Right lobe of liver (tissue), 6 donors: ENCODE measurements at regions of chr17 and their contacts with region 1.

Region 1: DNA sequence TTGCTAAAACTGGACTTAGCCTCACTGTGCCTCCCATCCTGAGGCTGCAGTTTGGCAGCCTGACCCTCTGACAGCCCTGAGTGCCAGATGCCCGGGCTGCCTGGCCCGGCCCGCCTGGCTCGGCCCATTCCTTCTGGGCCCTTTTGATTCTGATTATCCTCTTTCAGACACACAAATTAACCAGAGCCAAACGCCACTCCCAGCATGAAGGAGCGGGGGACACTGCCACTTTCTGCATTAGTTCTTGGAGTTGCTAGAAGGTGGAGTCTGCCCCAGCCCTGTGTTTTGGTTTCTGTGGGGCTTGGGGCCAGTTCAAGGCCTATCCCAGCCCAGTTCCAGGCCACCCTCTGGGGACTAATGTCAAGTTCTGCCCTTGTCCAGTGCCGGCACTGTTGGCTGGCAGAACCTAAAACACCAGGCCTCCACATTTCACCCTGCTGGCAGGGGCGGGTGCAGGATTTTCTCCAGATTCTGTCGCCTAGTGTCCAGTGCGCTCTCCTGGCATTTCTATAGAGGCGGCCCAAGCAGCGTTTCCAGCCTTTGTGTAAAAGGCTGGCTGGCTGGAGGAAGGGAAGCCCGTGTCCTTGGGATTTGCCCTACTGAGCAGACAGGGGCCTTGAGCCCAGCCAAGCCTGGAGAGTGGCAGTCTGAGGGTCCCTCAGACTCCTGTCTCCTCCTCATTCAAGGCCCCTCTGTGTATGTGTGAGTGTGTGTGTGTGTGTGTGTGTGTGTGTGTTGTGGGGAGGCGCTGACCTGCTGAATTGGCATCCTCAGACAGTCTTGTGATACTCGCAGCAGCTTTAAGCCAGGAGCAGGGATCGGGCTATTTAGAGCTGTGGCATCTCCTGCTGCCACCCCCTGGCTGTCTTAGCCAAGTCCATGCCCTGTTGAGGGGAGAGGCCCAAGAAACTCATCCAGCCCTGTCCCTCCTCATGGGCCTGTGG is 21.4 kb downstream of the PLCD3 start:
- DNase-seq: no peak
- ATAC-seq: peak in 2 of 4 donors; percentile 7 to 11
- H3K4me3 ChIP-seq: no peak overlapping the region
- H3K27ac ChIP-seq: no peak overlapping the region
- H3K4me1 ChIP-seq: peaks cover 0 to 4% (median 0%) of the 10 kb centered on the region in 4 donors
- H3K27me3 ChIP-seq: no peaks in the 10 kb centered on the region
- CTCF ChIP-seq: no peak
- POLR2A ChIP-seq: no peak

Region 2: DNA sequence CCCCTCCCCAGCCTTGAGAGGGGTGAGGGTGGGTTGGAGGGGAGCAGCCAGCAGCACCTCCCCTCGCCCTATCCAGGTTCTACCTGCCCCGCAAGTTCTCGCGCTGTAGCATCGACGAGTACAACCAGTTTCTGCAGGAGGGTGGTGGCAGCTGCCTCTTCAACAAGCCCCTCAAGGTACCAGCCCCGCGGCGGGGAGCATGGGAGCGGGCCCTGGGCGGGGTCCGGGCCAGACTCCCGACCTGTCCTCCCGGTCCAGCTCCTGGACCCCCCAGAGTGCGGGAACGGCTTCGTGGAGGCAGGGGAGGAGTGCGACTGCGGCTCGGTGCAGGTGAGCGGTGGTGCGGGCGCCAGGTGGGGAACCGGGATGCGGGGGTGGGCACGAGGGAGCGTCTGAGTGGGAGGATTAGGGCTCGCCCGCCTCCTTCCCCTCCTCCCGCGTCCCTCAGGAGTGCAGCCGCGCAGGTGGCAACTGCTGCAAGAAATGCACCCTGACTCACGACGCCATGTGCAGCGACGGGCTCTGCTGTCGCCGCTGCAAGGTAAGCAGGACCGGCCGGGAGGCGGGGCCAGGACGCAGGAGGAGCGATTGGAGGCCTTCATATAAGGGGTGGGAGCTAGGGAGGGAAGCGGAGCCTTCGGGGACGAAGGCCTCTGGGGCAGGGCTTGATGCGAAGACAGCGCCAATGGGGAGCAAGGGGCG is 335.7 kb before region 1 on chr17:
- intact Hi-C with region 1: loop called in 1 of 2 experiments (anchors 10 kb)
- DNase-seq: peak; percentile 97 to 98 (median 98)
- ATAC-seq: peak; percentile 93 to 96 (median 95)
- H3K4me3 ChIP-seq: peak overlapping the region; percentile 45 to 59 (median 57)
- H3K27ac ChIP-seq: no peak overlapping the region
- H3K4me1 ChIP-seq: peaks cover 0 to 13% (median 3%) of the 10 kb centered on the region in 4 donors
- H3K27me3 ChIP-seq: no peaks in the 10 kb centered on the region
- CTCF ChIP-seq: no peak
- POLR2A ChIP-seq: no peak

Region 3: GRCh38 chr17:45038728-45039634 is 72.0 kb before region 1 on chr17:
- intact Hi-C with region 1: loop called in 1 of 2 experiments (anchors 10 kb)
- DNase-seq: no peak
- ATAC-seq: no peak
- H3K4me3 ChIP-seq: no peak overlapping the region
- H3K27ac ChIP-seq: no peak overlapping the region
- H3K4me1 ChIP-seq: peaks cover 0 to 17% (median 3%) of the 10 kb centered on the region in 4 donors
- H3K27me3 ChIP-seq: no peaks in the 10 kb centered on the region
- CTCF ChIP-seq: no peak
- POLR2A ChIP-seq: no peak

Region 4: DNA sequence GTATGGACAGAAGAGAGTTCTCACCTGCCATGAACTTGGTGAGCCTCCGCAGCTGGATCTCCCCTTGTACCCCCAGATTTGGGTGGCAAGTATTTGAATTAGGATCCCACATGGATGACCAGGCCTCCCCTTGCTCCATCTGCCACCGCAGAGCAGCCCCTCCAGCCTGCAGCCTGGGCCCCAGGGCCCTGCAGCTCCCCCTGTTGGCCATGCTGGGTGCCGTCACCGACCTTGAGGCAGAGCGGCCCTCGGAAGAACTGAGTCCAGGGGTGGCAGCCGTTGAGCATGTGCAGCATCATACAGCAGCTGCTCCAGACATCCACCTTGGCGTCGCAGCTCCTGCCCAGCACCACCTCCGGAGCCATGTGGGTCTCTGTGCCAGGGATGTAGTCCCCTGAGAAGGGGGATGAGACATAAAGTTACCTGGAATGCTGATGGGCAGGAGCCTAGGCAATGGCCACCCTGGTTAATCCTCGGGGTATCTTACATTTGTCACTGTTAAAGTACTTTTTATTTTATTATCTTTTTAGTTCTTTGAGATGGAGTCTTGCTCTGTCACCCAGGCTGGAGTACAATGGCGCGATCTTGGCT is 160.0 kb after region 1 on chr17:
- intact Hi-C with region 1: no loop called
- DNase-seq: peak in 1 of 3 donors; percentile 45
- ATAC-seq: peak in 1 of 4 donors; percentile 24
- H3K4me3 ChIP-seq: no peak overlapping the region
- H3K27ac ChIP-seq: no peak overlapping the region
- H3K4me1 ChIP-seq: peaks cover 0 to 26% (median 12%) of the 10 kb centered on the region in 4 donors
- H3K27me3 ChIP-seq: no peaks in the 10 kb centered on the region
- CTCF ChIP-seq: peak; percentile 26 to 41 (median 31)
- POLR2A ChIP-seq: no peak